Activated T-helper 2 cell treated with anti-CD3 and anti-CD28 coated beads, Interferon-gamma antibody, Interleukin-2, Interleukin-4, amounts not matched to agents 10 μg/mL and 5 μg/mL and 100 μg/mL, durations not matched to agents 14 hours and 24 hours and 36 hours (primary cell): ENCODE measurements at regions of chr12 and their contacts with region 1.

Region 1: DNA sequence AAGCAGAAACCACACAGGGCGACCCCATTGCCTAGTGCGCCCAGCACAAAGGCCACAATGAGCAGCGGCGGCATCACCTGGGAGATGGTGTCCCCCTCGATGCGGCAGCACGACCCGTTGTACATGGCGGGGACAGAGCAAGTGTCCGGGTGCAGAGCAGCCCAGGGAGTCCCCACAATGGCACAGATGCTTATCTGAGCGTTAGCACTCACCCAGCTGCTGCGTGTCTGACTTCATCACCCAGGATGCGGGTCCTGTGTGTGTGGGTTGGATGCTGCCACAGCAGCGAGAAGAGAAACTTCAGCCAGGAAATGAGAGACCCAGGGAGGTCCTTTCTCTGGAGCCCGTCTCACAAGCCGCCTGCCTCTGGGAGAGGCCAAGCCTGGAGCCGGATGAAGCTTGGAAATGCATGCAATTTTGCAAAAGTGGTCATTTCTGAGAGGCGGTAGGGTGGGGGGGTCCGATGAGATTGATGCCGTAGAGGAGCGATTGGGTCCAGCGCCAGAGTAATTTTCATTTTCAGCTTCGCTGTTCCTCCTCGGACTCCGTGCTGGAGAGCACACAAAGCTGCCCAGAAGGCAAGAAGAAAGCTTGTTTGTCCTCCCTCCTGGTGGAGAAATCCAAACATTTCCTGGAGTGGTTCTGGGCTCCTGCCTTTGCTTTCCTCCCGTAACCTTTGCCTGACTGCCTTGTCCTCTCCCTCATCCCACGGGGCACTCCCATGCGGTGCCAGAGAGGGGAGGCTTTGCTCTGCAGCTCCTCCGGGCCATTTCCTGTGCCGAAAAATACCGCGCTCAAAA is at the start of gene HCAR1:
- DNase-seq: peak; percentile 74
- H3K4me3 Mint-ChIP-seq: peak within 1 kb of the TSS; percentile 74
- H3K27ac Mint-ChIP-seq: peak within 1 kb of the TSS; percentile 86
- H3K4me1 Mint-ChIP-seq: peaks cover 77% of the 10 kb centered on the region
- H3K27me3 Mint-ChIP-seq: no peaks in the 10 kb centered on the region
- total RNA-seq, gene HCAR1: 2.6 and 2.8 TPM in 2 replicates

Region 2: GRCh38 chr12:122473543-122474318 is 256.7 kb before region 1 on chr12:
- intact Hi-C with region 1: no loop called
- DNase-seq: no peak
- H3K4me3 Mint-ChIP-seq: no peak overlapping the region
- H3K27ac Mint-ChIP-seq: peak overlapping the region; percentile 26
- H3K4me1 Mint-ChIP-seq: peaks cover 24% of the 10 kb centered on the region
- H3K27me3 Mint-ChIP-seq: no peaks in the 10 kb centered on the region

Region 3: GRCh38 chr12:122646517-122647217 is 83.7 kb before region 1 on chr12:
- intact Hi-C with region 1: loop called (anchors 1 kb)
- DNase-seq: peak; percentile 39
- H3K4me3 Mint-ChIP-seq: peak overlapping the region; percentile 44
- H3K27ac Mint-ChIP-seq: peak overlapping the region; percentile 60
- H3K4me1 Mint-ChIP-seq: peaks cover 14% of the 10 kb centered on the region
- H3K27me3 Mint-ChIP-seq: no peaks in the 10 kb centered on the region

Region 4: GRCh38 chr12:122752464-122753318 is 22.3 kb after region 1 on chr12 and contains the start of gene DENR:
- intact Hi-C with region 1: loop called (anchors 2 kb)
- DNase-seq: peak; percentile 99
- H3K4me3 Mint-ChIP-seq: peak within 1 kb of the TSS; percentile 89
- H3K27ac Mint-ChIP-seq: peak within 1 kb of the TSS; percentile 90
- H3K4me1 Mint-ChIP-seq: peaks cover 42% of the 10 kb centered on the region
- H3K27me3 Mint-ChIP-seq: no peaks in the 10 kb centered on the region
- total RNA-seq, gene DENR: 76.7 and 79.6 TPM in 2 replicates

Region 5: DNA sequence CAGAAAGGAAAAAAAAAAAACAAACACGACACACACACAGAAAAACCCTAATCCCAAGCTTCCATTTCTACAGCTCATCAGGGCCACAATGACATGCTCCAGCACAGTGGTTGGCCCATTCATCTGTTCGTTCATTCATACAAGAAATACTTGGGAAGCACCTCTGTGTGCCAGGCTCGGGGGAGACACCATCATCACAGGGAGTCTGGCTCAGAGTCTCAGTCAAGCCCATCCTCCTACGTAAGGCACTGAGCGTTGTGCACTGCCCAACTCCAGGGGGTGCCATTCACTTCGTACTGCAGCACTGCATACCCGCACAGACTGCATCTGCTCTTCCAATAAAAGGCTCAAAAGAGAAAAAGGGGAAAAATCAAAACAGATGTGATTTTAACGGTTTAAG is 150.3 kb after region 1 on chr12:
- intact Hi-C with region 1: no loop called
- DNase-seq: no peak
- H3K4me3 Mint-ChIP-seq: no peak overlapping the region
- H3K27ac Mint-ChIP-seq: no peak overlapping the region
- H3K4me1 Mint-ChIP-seq: peaks cover 24% of the 10 kb centered on the region
- H3K27me3 Mint-ChIP-seq: peaks cover 54% of the 10 kb centered on the region